ENCODE measurements at regions of chr19 and their contacts with region 1.

Region 1: GRCh38 chr19:42284591-42285341 is 15.7 kb downstream of the CIC start:
- DNase-seq: peak; percentile 65
- ATAC-seq: no peak

Region 2: GRCh38 chr19:42244347-42245220 is 40.2 kb before region 1 on chr19:
- intact Hi-C with region 1: loop called (anchors 5 kb)
- DNase-seq: peak; percentile 94
- ATAC-seq: peak; percentile 48

Region 3: GRCh38 chr19:42386974-42387707 is 102.4 kb after region 1 on chr19:
- intact Hi-C with region 1: no loop called
- DNase-seq: peak; percentile 74
- ATAC-seq: peak; percentile 83

Measured in left ventricle myocardium superior (tissue), 1 donor.